SK-N-SH (cell line): ENCODE measurements at regions of chr7 and their contacts with region 1.

Region 1: GRCh38 chr7:29105752-29106668 is 40.3 kb downstream of the CPVL start:
- DNase-seq: peak; percentile 43
- H3K4me3 ChIP-seq: no peak overlapping the region; a peak in 1 of 4 replicates
- H3K27ac ChIP-seq: no peak overlapping the region; a peak in 1 of 4 replicates
- H3K4me1 ChIP-seq: peaks cover 0 to 16% of the 10 kb centered on the region in 2 experiments; a peak in 1 of 4 replicates
- H3K27me3 ChIP-seq: peaks cover 10% of the 10 kb centered on the region
- CTCF ChIP-seq: peak; percentile 94
- EP300 ChIP-seq: no peak
- RAD21 ChIP-seq: peak; percentile 98

Region 2: GRCh38 chr7:28939844-28940544 is 166.0 kb before region 1 on chr7:
- CTCF ChIA-PET with region 1: interaction called, 359 read pairs
- POLR2A ChIA-PET with region 1: no interaction called
- DNase-seq: peak; percentile 29
- H3K4me3 ChIP-seq: no peak overlapping the region
- H3K27ac ChIP-seq: peak overlapping the region in 1 of 2 experiments; percentile 72; a peak in 2 of 4 replicates
- H3K4me1 ChIP-seq: peaks cover 7 to 49% of the 10 kb centered on the region in 2 experiments; a peak in 3 of 4 replicates
- H3K27me3 ChIP-seq: no peaks in the 10 kb centered on the region
- CTCF ChIP-seq: no peak
- EP300 ChIP-seq: no peak
- RAD21 ChIP-seq: no peak

Region 3: GRCh38 chr7:28961972-28962371 is 144.0 kb before region 1 on chr7:
- CTCF ChIA-PET with region 1: interaction called, 359 read pairs
- POLR2A ChIA-PET with region 1: interaction called, 15 read pairs
- DNase-seq: no peak
- H3K4me3 ChIP-seq: no peak overlapping the region
- H3K27ac ChIP-seq: peak overlapping the region in 1 of 2 experiments; percentile 8; a peak in 1 of 4 replicates
- H3K4me1 ChIP-seq: peaks cover 0 to 28% of the 10 kb centered on the region in 2 experiments; a peak in 1 of 4 replicates
- H3K27me3 ChIP-seq: peaks cover 37% of the 10 kb centered on the region
- CTCF ChIP-seq: no peak
- EP300 ChIP-seq: no peak
- RAD21 ChIP-seq: no peak

Region 4: DNA sequence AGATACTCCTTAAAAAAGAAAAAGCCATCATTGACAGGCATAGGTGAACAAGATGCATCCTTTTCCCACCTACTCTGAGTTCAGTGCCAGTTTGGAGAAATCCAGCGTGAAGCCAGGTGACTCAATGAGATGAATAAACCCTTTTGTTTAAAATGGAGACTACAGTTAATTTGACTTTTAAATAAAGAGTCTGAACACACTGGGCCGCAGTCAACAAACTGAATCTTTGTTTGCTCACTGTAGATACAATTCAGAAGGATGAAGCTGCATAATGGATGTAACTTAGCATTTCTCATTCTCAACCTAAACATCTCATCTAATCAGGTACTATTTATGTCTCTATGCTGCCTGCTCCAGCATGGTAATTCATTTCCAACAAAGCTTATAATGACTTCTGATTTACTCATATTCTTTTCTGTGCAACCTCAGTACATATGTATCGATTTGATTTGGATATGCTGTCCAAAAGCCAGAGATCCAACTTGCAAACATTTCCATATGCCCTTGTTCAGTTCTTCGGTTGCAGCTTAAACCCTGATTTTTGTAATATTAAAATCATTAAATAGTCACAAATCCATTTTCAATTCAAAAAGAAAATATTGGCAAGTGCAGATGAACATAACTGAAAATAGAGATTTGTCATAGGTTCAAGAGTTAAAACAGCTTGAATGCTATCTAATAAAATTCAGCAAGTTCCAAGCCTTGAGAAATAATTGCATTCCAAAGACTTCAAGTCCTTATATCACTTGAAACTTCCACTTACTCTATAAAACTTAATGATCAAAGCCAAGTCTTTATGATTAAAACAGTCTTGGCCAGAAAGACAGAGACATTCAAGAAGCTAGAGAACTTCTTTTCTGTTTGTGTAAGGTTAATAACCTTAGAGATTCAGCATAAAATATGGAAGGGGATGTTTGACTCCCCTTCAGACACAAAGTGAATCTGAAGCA is 27.4 kb before region 1 on chr7:
- CTCF ChIA-PET with region 1: interaction called, 23 read pairs
- POLR2A ChIA-PET with region 1: no interaction called
- DNase-seq: no peak
- H3K4me3 ChIP-seq: no peak overlapping the region
- H3K27ac ChIP-seq: peak overlapping the region in 1 of 2 experiments; percentile 36; a peak in 1 of 4 replicates
- H3K4me1 ChIP-seq: peaks cover 0 to 10% of the 10 kb centered on the region in 2 experiments; a peak in 2 of 4 replicates
- H3K27me3 ChIP-seq: no peaks in the 10 kb centered on the region
- CTCF ChIP-seq: no peak
- EP300 ChIP-seq: no peak
- RAD21 ChIP-seq: no peak

Region 5: GRCh38 chr7:29119538-29120199 is 13.7 kb after region 1 on chr7:
- CTCF ChIA-PET with region 1: interaction called, 57 read pairs
- POLR2A ChIA-PET with region 1: no interaction called
- DNase-seq: no peak
- H3K4me3 ChIP-seq: no peak overlapping the region
- H3K27ac ChIP-seq: no peak overlapping the region
- H3K4me1 ChIP-seq: no peaks in the 10 kb centered on the region
- H3K27me3 ChIP-seq: 0 out of 2 replicates have a peak, but pooled peaks cover 5% of the 10 kb centered on the region
- CTCF ChIP-seq: no peak
- EP300 ChIP-seq: no peak
- RAD21 ChIP-seq: no peak

Region 6: DNA sequence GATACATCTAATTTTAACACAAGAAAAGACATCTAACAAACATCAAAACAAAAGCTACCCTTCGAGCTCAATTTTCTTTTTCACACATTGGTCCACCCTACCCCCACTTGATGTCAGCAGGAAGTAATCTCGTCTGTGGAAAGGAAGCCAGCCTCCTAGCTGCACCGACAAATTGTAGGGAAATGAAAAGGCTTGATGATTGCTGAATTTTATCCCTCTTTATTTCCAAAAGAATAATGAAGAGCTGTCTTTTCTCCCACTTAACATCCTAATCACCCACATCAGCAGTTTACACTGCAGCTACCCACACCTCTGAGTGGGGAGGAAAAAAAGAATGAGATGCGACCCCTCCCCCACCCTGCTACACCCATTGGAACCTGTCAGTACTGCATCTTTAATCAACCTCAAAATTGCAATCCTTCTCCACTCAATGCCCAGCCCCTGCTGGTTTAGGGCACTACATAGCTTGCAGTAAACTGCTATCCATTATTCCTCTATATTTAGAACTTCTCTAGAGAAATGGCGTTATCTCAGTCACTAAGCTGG is 51.0 kb after region 1 on chr7:
- CTCF ChIA-PET with region 1: interaction called, 15 read pairs
- POLR2A ChIA-PET with region 1: no interaction called
- DNase-seq: peak; percentile 39
- H3K4me3 ChIP-seq: no peak overlapping the region
- H3K27ac ChIP-seq: no peak overlapping the region
- H3K4me1 ChIP-seq: peaks cover 0 to 26% of the 10 kb centered on the region in 2 experiments; a peak in 2 of 4 replicates
- H3K27me3 ChIP-seq: no peaks in the 10 kb centered on the region
- CTCF ChIP-seq: no peak
- EP300 ChIP-seq: no peak
- RAD21 ChIP-seq: no peak

Region 7: GRCh38 chr7:29254591-29254990 is 148.6 kb after region 1 on chr7:
- CTCF ChIA-PET with region 1: no interaction called
- POLR2A ChIA-PET with region 1: no interaction called
- DNase-seq: no peak
- H3K4me3 ChIP-seq: no peak overlapping the region
- H3K27ac ChIP-seq: no peak overlapping the region
- H3K4me1 ChIP-seq: peaks cover 0 to 4% of the 10 kb centered on the region in 2 experiments; a peak in 2 of 4 replicates
- H3K27me3 ChIP-seq: no peaks in the 10 kb centered on the region
- CTCF ChIP-seq: no peak
- EP300 ChIP-seq: no peak
- RAD21 ChIP-seq: no peak

Region 8: GRCh38 chr7:29265208-29265923 is 159.4 kb after region 1 on chr7:
- CTCF ChIA-PET with region 1: no interaction called
- POLR2A ChIA-PET with region 1: no interaction called
- DNase-seq: no peak
- H3K4me3 ChIP-seq: no peak overlapping the region
- H3K27ac ChIP-seq: no peak overlapping the region
- H3K4me1 ChIP-seq: peaks cover 0 to 3% of the 10 kb centered on the region in 2 experiments; a peak in 2 of 4 replicates
- H3K27me3 ChIP-seq: no peaks in the 10 kb centered on the region
- CTCF ChIP-seq: no peak
- EP300 ChIP-seq: no peak
- RAD21 ChIP-seq: no peak